Ovary (tissue), 10 donors: ENCODE measurements at regions of chr1 and their contacts with region 1.

Region 1: DNA sequence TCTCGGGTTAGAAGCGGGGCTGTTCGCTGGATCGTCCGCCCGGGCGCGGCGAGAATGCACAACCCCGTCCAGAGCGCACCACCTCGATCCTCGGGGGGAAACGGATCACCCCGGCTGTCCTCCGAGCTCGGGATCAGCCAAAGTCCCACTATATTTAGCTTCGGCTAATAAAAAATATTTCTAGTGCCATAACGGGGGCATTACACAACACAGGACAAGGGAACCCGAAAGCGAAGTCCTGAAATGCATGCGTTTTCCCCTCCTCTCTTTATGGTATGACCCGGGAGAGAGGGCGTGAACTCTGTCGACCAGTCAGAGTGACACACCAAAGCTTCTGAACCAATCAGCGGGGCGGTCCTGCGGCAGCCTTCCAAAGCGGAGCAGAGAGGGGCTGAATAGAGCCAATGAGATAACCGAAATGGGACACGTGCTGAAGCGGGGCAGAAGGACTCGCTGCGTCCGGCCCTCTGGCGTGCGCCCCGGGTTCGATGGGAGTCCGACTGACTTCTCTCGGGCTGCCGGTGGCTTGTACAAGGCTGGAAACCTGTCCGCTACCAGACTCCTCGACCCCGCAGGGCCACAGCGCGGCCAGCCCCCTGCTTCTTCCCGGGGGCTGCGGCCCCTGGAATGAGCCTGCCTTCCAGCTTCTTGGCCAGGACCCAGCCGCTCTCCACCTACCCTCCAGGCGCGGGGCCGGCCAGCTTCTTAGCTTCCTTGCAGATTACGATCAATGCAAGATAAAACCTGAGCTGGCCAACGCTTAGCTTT is at the start of gene ALDH4A1:
- DNase-seq: peak; percentile 97 to 98 (median 98)
- H3K4me3 ChIP-seq: peak within 1 kb of the TSS; percentile 64
- H3K27ac ChIP-seq: peak within 1 kb of the TSS; percentile 47 to 89
- H3K4me1 ChIP-seq: peaks cover 3% of the 10 kb centered on the region
- H3K27me3 ChIP-seq: no peaks in the 10 kb centered on the region
- CTCF ChIP-seq: peak in 1 of 3 donors; percentile 8
- EP300 ChIP-seq: no peak
- POLR2A ChIP-seq: no peak
- total RNA-seq, gene ALDH4A1: 4.4 to 13.9 (median 8.0) TPM

Region 2: DNA sequence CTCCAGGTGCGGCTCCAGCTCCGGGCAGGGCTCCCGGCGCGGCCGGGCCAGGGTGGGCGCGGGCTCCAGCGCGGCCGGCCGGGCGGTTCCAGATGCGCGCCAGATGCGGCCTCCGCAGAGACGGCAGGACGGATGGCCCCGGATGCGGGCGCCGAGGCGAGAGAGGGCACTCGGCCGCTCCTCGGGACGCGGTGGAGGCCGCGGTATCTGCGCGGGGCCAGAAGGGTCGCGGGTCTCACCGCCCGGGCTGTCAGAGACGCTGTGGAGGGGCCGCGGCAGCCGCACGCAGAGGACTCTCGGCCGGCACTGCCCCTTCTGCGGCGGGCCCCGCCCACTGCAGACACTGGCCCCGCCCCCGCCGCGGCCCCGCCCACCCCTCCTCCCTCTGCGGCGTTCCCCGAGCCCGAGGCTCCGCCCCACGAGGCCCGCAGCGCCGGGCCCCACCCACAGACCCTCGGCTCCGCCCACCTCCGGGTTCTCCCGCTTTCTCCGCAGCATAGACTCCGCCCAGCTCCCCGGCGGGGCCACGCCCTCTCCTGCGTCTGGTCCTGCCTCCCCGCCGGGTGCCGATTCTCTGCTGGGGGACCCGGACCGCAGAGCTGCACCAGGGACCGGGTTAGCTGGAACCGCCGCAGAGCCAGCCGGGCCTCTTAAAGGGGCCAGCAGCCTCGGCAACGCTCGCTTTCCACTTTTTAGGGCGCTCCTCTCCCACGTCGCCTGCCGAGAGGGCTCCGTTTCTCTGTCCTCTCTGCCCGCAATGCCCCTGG is 53.8 kb after region 1 on chr1 and contains the start of gene IFFO2:
- intact Hi-C with region 1: loop called in 2 of 4 experiments (anchors 2 to 10 kb)
- DNase-seq: peak; percentile 98 to 99 (median 99)
- H3K4me3 ChIP-seq: peak within 1 kb of the TSS; percentile 73
- H3K27ac ChIP-seq: peak within 1 kb of the TSS; percentile 64
- H3K4me1 ChIP-seq: peaks cover 14% of the 10 kb centered on the region
- H3K27me3 ChIP-seq: no peaks in the 10 kb centered on the region
- CTCF ChIP-seq: no peak
- EP300 ChIP-seq: no peak
- POLR2A ChIP-seq: peak; percentile 86
- total RNA-seq, gene IFFO2: 3.6 to 11.2 (median 6.2) TPM

Region 3: GRCh38 chr1:19096036-19096833 is 193.5 kb after region 1 on chr1:
- intact Hi-C with region 1: loop called in 1 of 4 experiments (anchors 5 kb)
- DNase-seq: no peak
- H3K4me3 ChIP-seq: no peak overlapping the region
- H3K27ac ChIP-seq: no peak overlapping the region
- H3K4me1 ChIP-seq: no peaks in the 10 kb centered on the region
- H3K27me3 ChIP-seq: no peaks in the 10 kb centered on the region
- CTCF ChIP-seq: no peak
- EP300 ChIP-seq: no peak
- POLR2A ChIP-seq: no peak

Region 4: DNA sequence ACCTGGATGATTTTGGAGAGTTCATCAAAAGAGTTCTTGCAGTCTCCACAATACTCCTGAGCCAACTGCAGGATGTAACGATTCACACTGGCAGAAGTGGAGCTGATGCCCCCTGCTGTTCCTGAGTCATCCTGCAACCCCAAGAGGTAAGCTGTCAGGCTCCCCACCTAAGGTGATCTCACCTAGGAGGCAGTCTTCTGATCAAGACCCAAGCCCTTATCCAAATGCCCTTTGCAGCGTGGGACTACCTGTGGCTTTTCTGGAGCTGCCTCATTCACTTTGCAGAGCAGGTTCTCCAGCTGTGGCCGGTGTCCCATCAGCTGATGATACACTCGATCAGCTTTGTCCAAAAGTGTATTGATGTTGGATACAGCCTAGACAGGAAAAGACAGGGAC is 211.0 kb after region 1 on chr1:
- intact Hi-C with region 1: loop called in 1 of 4 experiments (anchors 10 kb)
- DNase-seq: no peak
- H3K4me3 ChIP-seq: no peak overlapping the region
- H3K27ac ChIP-seq: no peak overlapping the region
- H3K4me1 ChIP-seq: no peaks in the 10 kb centered on the region
- H3K27me3 ChIP-seq: no peaks in the 10 kb centered on the region
- CTCF ChIP-seq: no peak
- EP300 ChIP-seq: no peak
- POLR2A ChIP-seq: no peak

Region 5: GRCh38 chr1:19232526-19232851 is 329.8 kb after region 1 on chr1:
- intact Hi-C with region 1: loop called in 1 of 4 experiments (anchors 10 kb)
- DNase-seq: peak; percentile 64 to 78 (median 71)
- H3K4me3 ChIP-seq: no peak overlapping the region
- H3K27ac ChIP-seq: peak overlapping the region in 1 of 2 donors; percentile 66
- H3K4me1 ChIP-seq: peaks cover 19% of the 10 kb centered on the region
- H3K27me3 ChIP-seq: no peaks in the 10 kb centered on the region
- CTCF ChIP-seq: peak in 1 of 3 donors; percentile 36
- EP300 ChIP-seq: no peak
- POLR2A ChIP-seq: no peak

Region 6: GRCh38 chr1:19240673-19241538 is 338.2 kb after region 1 on chr1:
- intact Hi-C with region 1: loop called in 2 of 4 experiments (anchors 10 kb)
- DNase-seq: peak; percentile 57 to 81 (median 76)
- H3K4me3 ChIP-seq: no peak overlapping the region
- H3K27ac ChIP-seq: peak overlapping the region; percentile 11 to 42
- H3K4me1 ChIP-seq: no peaks in the 10 kb centered on the region
- H3K27me3 ChIP-seq: no peaks in the 10 kb centered on the region
- CTCF ChIP-seq: peak; percentile 74 to 92 (median 88)
- EP300 ChIP-seq: no peak
- POLR2A ChIP-seq: no peak